H1 (cell line): ENCODE measurements at regions of chr11 and their contacts with region 1.

Region 1: GRCh38 chr11:44775366-44775984 is 48.7 kb downstream of the TSPAN18 start:
- DNase-seq: peak in 1 of 2 experiments; percentile 86
- H3K4me3 ChIP-seq: no peak overlapping the region
- H3K27ac ChIP-seq: no peak overlapping the region
- H3K4me1 ChIP-seq: peaks cover 10 to 28% (median 13%) of the 10 kb centered on the region in 4 experiments
- H3K27me3 ChIP-seq: no peaks in the 10 kb centered on the region
- CTCF ChIP-seq: peak; percentile 91 to 95 (median 94)
- EP300 ChIP-seq: no peak
- POLR2A ChIP-seq: no peak
- RAD21 ChIP-seq: peak; percentile 71 to 85

Region 2: DNA sequence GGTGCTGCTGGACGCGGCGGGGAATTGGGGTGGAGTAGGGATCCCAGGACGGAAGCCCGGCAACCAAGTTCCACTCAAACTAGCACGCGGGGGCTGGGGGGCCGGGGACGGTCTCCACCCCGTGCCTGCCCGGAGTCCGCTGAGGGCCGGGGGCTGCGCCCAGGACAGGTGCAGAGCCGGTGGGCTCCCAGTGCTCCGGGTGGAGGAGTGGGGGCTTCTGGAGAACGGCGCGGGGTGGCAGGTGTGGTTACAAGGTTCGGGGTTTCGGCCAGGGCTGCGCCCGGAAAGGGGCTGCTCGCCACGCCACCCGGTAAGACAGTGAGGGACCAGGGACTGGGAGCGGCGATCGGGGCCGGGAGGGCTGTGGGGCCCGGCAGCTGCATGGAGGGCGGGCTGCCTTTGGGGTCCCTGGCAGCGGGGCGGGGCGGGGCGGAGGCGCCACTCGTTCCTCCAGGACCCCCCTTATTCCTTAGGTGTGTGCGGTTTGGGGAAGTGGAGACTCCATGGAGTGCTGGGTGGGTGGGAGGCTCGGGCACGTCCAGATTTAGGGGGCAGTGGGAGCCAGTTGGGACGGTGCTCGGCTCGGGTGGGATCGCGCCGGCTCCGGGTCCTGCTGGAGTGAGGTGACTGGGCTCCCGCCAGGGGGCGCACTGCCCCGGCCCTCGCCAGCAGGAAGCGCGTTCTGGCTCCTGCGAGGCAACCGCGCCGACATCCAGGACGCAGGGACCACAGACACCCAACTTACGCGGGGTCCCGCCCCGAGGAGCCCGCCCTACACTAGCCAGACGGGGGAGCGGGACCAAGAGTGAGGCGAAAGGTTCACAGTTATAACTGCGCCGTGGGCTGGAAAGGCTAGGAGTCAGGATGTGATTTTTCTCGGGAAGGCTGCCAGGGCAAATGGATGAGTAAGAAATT is 47.8 kb before region 1 on chr11:
- CTCF ChIA-PET with region 1: interaction called, 63 read pairs
- POLR2A ChIA-PET with region 1: no interaction called
- DNase-seq: peak in 1 of 2 experiments; percentile 93
- H3K4me3 ChIP-seq: peak overlapping the region; percentile 14 to 73 (median 50)
- H3K27ac ChIP-seq: no peak overlapping the region
- H3K4me1 ChIP-seq: peaks cover 24 to 41% (median 26%) of the 10 kb centered on the region in 4 experiments
- H3K27me3 ChIP-seq: peaks cover 26 to 66% (median 57%) of the 10 kb centered on the region in 4 experiments
- CTCF ChIP-seq: peak; percentile 81 to 94 (median 89)
- EP300 ChIP-seq: no peak
- POLR2A ChIP-seq: no peak
- RAD21 ChIP-seq: peak; percentile 80 to 85

Region 3: DNA sequence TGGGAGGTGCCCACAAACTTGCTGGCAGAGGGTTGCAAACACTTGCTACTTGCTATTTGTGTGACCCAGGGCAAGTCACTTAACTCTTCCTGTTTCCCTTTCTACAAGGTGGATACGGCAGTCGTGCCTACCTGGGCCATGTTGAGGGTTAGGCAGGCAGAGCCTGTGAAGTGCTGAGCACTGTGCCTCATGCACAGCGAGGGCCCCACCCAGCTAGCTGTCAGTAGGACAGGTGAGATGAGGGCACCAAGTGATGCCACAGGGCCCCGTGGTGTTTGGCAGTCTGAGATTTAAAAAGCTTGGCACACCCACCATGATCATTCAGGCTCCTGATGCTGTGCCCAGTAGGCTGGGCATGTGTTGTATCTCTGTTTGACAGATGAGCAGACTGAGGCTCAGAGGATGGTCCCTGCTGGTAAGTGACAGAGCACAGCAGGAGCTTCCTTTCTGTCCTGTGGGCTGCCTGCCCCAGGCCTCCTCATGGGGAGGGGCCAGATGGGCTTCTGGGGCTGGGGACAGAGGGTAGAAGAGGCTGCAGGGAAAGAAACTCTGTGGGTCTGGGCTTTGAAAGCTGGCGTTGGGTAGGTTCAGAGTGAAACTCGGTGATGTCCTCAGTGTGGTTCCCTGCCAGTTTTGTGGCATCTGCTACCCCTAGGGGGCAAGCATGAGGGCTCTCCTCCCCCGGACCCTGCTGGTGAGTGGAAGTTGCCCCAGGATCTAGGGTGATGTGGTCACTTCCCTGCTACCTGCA is 10.6 kb after region 1 on chr11:
- CTCF ChIA-PET with region 1: interaction called, 86 read pairs
- POLR2A ChIA-PET with region 1: no interaction called
- DNase-seq: no peak
- H3K4me3 ChIP-seq: peak overlapping the region in 1 of 4 experiments; percentile 9; a peak in 1 of 8 replicates
- H3K27ac ChIP-seq: no peak overlapping the region
- H3K4me1 ChIP-seq: peaks cover 8 to 19% (median 19%) of the 10 kb centered on the region in 4 experiments
- H3K27me3 ChIP-seq: peaks cover 0 to 4% (median 0%) of the 10 kb centered on the region in 4 experiments; a peak in 1 of 7 replicates
- CTCF ChIP-seq: peak; percentile 51 to 62 (median 58)
- EP300 ChIP-seq: no peak
- POLR2A ChIP-seq: no peak
- RAD21 ChIP-seq: peak; percentile 24 to 54; a peak in 3 of 4 replicates

Region 4: DNA sequence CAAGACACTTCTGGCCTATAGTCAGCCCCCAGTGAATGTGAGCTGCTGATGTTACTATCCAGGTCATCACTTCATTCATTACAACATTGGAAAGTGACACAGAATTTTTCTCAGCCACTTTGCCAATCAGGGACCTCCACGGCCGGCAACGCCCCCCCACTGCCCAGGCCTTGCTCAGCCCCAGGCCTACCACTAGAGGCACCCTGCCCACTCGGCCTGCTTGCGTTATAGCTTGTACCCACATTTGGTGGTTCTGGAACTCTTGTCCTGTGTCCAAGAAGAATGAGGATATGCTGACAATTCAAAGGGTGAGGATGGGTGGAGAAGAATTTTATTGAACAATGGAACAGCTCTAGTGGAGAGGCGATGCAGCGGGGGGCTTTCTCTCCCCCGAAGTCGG is 47.5 kb after region 1 on chr11:
- CTCF ChIA-PET with region 1: interaction called, 15 read pairs
- POLR2A ChIA-PET with region 1: no interaction called
- DNase-seq: peak in 1 of 2 experiments; percentile 57
- H3K4me3 ChIP-seq: 0 out of 8 replicates have a peak overlapping the region, but pooled peaks of 1 of the 4 experiments have one; percentile 31
- H3K27ac ChIP-seq: no peak overlapping the region
- H3K4me1 ChIP-seq: peaks cover 11 to 32% (median 21%) of the 10 kb centered on the region in 4 experiments
- H3K27me3 ChIP-seq: peaks cover 0 to 25% (median 10%) of the 10 kb centered on the region in 4 experiments; a peak in 5 of 7 replicates
- CTCF ChIP-seq: peak; percentile 73 to 99 (median 93)
- EP300 ChIP-seq: no peak
- POLR2A ChIP-seq: no peak
- RAD21 ChIP-seq: peak; percentile 64 to 74

Region 5: DNA sequence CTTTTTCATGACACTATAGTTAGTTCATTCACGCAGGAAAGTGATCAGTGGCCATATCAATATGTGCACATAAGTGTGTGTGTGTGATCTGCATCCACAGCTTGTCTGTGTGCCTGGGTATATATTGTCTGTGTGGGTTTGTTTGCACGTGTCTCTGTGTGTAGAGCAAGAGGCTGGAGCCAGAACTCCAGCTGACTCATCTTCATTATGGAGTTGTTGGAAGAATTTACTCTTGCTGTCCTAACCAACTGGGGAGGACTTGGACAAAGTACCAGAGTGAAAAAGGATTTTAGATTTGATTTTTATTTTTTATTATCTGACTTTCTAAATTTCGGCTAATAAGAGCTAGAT is 111.3 kb after region 1 on chr11:
- CTCF ChIA-PET with region 1: interaction called, 87 read pairs
- POLR2A ChIA-PET with region 1: no interaction called
- DNase-seq: no peak
- H3K4me3 ChIP-seq: no peak overlapping the region
- H3K27ac ChIP-seq: no peak overlapping the region
- H3K4me1 ChIP-seq: peaks cover 14 to 31% (median 21%) of the 10 kb centered on the region in 4 experiments
- H3K27me3 ChIP-seq: peaks cover 0 to under 1% (median under 1%) of the 10 kb centered on the region in 4 experiments; a peak in 3 of 7 replicates
- CTCF ChIP-seq: no peak
- EP300 ChIP-seq: no peak
- POLR2A ChIP-seq: no peak
- RAD21 ChIP-seq: no peak

Region 6: DNA sequence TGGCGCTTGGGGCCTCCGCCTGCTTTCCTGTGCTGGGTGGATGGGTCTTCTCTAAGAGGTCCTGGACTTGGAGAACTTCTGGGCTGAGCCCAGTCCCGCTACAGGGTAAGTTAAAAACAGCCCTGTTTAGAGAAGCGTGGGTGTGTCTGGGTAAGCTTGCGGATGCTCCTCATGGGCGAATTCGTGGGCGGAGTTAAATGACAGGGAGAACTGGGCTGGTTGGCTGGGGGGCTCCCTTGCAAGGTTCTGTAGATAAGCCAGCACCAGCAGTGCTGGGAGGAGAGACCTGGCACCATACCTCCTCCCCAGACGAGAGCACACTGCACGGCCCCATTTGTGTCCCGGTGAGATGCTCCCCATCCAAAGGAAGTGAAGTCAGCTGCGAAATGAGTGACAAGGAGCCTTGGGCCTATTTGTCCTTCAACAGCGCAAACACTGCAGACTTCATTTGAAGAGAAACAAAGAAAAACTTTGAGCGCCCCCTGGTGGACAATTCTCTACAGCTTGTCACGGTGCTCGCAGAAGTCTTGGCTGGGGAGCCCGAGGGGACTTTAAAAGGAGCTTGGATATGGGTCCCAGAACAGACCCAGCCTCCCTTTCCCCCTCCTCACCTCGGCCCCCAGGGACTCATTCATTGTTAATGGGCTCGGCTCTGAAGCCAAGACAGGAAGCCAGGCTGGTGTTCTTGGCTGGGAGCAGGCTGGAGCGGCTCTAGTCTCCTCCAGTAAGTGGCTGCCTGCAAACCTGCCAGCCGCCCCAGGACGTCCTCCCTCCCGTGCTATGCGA is 135.7 kb after region 1 on chr11:
- CTCF ChIA-PET with region 1: interaction called, 32 read pairs
- POLR2A ChIA-PET with region 1: no interaction called
- DNase-seq: peak; percentile 82 to 95
- H3K4me3 ChIP-seq: peak overlapping the region in 2 of 4 experiments; percentile 10 to 47; a peak in 3 of 8 replicates
- H3K27ac ChIP-seq: no peak overlapping the region
- H3K4me1 ChIP-seq: peaks cover 0 to 29% (median 6%) of the 10 kb centered on the region in 4 experiments; a peak in 6 of 7 replicates
- H3K27me3 ChIP-seq: no peaks in the 10 kb centered on the region; a peak in 2 of 7 replicates
- CTCF ChIP-seq: peak; percentile 52 to 79 (median 67)
- EP300 ChIP-seq: 0 out of 3 replicates have a peak, but pooled peaks of 1 of the 2 experiments have one; percentile 7
- POLR2A ChIP-seq: no peak
- RAD21 ChIP-seq: peak; percentile 74 to 82